ENCODE measurements at regions of chr15 and their contacts with region 1.

Region 1: GRCh38 chr15:48800811-48801455 is 9.9 kb downstream of the CEP152 start:
- DNase-seq: no peak
- H3K4me3 Mint-ChIP-seq: no peak overlapping the region
- H3K27ac Mint-ChIP-seq: no peak overlapping the region
- H3K4me1 Mint-ChIP-seq: peaks cover 49% of the 10 kb centered on the region
- H3K27me3 Mint-ChIP-seq: no peaks in the 10 kb centered on the region

Region 2: GRCh38 chr15:48507416-48508065 is 293.4 kb before region 1 on chr15:
- intact Hi-C with region 1: loop called (anchors 10 kb)
- DNase-seq: no peak
- H3K4me3 Mint-ChIP-seq: no peak overlapping the region
- H3K27ac Mint-ChIP-seq: no peak overlapping the region
- H3K4me1 Mint-ChIP-seq: no peaks in the 10 kb centered on the region
- H3K27me3 Mint-ChIP-seq: peaks cover 2% of the 10 kb centered on the region

Region 3: GRCh38 chr15:48759921-48760320 is 41.0 kb before region 1 on chr15:
- intact Hi-C with region 1: no loop called
- DNase-seq: no peak
- H3K4me3 Mint-ChIP-seq: no peak overlapping the region
- H3K27ac Mint-ChIP-seq: no peak overlapping the region
- H3K4me1 Mint-ChIP-seq: no peaks in the 10 kb centered on the region
- H3K27me3 Mint-ChIP-seq: no peaks in the 10 kb centered on the region

Region 4: DNA sequence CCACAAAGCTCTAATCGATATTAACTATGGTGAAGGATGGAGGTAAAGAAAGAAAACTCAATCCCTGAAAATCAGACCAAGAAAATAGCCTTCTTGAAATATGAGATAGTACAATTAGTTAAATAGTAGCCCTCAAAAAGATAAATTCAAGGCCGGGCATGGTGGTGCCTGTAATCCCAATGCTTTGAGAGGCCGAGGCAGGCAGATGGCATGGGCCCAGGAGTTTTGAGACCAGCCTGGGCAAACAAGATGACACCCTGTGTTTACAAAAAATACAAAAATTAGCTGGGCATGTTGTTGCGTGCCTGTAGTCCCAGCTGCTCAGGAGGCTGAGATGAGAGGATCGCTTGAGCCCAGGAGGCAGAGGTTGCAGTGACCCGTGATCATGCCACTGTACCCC is 41.6 kb after region 1 on chr15:
- intact Hi-C with region 1: no loop called
- DNase-seq: no peak
- H3K4me3 Mint-ChIP-seq: no peak overlapping the region
- H3K27ac Mint-ChIP-seq: no peak overlapping the region
- H3K4me1 Mint-ChIP-seq: no peaks in the 10 kb centered on the region
- H3K27me3 Mint-ChIP-seq: peaks cover 2% of the 10 kb centered on the region

Region 5: DNA sequence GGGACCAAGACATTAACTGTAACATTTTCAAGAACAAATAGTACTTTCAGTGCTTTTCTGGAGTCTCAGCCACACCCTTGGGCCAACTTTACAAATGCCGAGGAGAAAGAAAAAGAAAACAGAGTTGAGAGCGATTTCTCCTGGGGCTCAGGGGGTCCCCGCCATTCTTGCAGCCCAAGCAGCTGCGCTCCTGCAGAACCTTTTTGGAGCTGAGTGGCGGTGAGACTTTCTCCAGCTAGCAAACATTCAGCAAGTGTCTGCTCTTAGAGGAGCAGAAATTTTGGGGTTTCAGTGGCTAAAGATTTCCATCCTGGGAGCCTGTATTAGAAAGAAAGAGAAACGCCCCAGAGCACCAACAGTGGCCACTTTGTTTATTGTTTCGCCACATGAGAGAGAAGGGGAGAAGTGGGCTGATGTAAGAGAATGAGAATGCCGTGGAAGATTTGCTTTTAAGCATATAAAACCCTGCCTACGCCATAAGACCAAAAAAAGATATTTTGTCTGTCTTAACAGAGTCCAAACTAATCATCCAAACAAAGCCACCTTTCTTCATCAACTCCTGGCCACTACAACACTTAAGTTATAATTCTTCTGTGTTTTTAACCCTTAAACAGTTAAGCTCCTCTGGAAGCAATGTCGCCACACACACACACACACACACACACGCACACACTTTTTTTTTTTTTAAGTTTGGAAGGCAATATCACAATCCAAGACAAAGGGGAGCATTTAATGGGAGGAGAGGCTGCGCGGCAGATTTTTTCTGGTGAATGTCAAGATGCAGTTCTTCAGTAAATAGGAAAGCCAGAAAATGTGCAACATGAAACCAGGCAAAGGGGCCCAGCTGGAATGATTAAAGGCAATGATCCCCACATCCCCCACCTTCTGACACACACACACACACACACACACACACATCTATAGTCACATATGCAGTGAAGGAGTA is 96.2 kb after region 1 on chr15:
- intact Hi-C with region 1: no loop called
- DNase-seq: no peak
- H3K4me3 Mint-ChIP-seq: no peak overlapping the region
- H3K27ac Mint-ChIP-seq: peak overlapping the region; percentile 73
- H3K4me1 Mint-ChIP-seq: peaks cover 24% of the 10 kb centered on the region
- H3K27me3 Mint-ChIP-seq: no peaks in the 10 kb centered on the region

Measured in activated T-helper 2 cell treated with anti-CD3 and anti-CD28 coated beads, Interferon-gamma antibody, Interleukin-2, Interleukin-4, amounts not matched to agents 10 μg/mL and 5 μg/mL and 100 μg/mL, durations not matched to agents 14 hours and 24 hours and 36 hours (primary cell).